Dorsolateral prefrontal cortex (tissue), 120 donors: ENCODE measurements at regions of chr5 and their contacts with region 1.

Region 1: GRCh38 chr5:78509884-78510769 is 138.4 kb downstream of the LHFPL2 start:
- DNase-seq: peak in 9 of 10 donors; percentile 30 to 77 (median 54)
- H3K4me3 ChIP-seq: peak overlapping the region; percentile 36 to 75 (median 60)
- H3K27ac ChIP-seq: peak overlapping the region in 58 of 59 donors; percentile 8 to 88 (median 70)
- H3K27me3 ChIP-seq: no peaks in the 10 kb centered on the region
- CTCF ChIP-seq: peak in 22 of 56 donors; percentile 5 to 43 (median 26)

Region 2: GRCh38 chr5:78359831-78360673 is 150.1 kb before region 1 on chr5 and contains the start of gene SCAMP1:
- intact Hi-C with region 1: loop called (anchors 10 kb)
- DNase-seq: peak; percentile 78 to 93 (median 86)
- H3K4me3 ChIP-seq: peak within 1 kb of the TSS; percentile 67 to 100 (median 97)
- H3K27ac ChIP-seq: peak within 1 kb of the TSS; percentile 72 to 98 (median 91)
- H3K27me3 ChIP-seq: no peaks in the 10 kb centered on the region
- CTCF ChIP-seq: peak in 42 of 56 donors; percentile 13 to 61 (median 37)
- total RNA-seq, gene SCAMP1: 54.8 to 153 (median 108) TPM

Region 3: GRCh38 chr5:78467752-78468357 is 42.3 kb before region 1 on chr5:
- intact Hi-C with region 1: loop called in 1 of 2 experiments (anchors 5 kb)
- DNase-seq: no peak
- H3K4me3 ChIP-seq: no peak overlapping the region
- H3K27ac ChIP-seq: no peak overlapping the region
- H3K27me3 ChIP-seq: no peaks in the 10 kb centered on the region
- CTCF ChIP-seq: peak; percentile 43 to 85 (median 77)

Region 4: GRCh38 chr5:79235634-79236363 is 725.7 kb after region 1 on chr5 and contains the start of gene JMY:
- intact Hi-C with region 1: loop called in 1 of 2 experiments (anchors 10 kb)
- DNase-seq: peak; percentile 72 to 90 (median 88)
- H3K4me3 ChIP-seq: peak within 1 kb of the TSS; percentile 64 to 99 (median 92)
- H3K27ac ChIP-seq: peak within 1 kb of the TSS; percentile 41 to 95 (median 87)
- H3K27me3 ChIP-seq: no peaks in the 10 kb centered on the region
- CTCF ChIP-seq: peak in 25 of 56 donors; percentile 4 to 61 (median 26)
- total RNA-seq, gene JMY: 21.8 to 40.5 (median 29.8) TPM